Activated B cell treated with CpG ODN at 0.5 μM for 24 hours (primary cell): ENCODE measurements at regions of chr9 and their contacts with region 1.

Region 1: GRCh38 chr9:118975736-118976135 is 393.5 kb downstream of the BRINP1 start:
- DNase-seq: no peak
- ATAC-seq: no peak
- H3K4me3 Mint-ChIP-seq: no peak overlapping the region
- H3K27ac Mint-ChIP-seq: no peak overlapping the region
- H3K4me1 Mint-ChIP-seq: no peaks in the 10 kb centered on the region
- H3K27me3 Mint-ChIP-seq: no peaks in the 10 kb centered on the region
- CTCF ChIP-seq: no peak

Region 2: DNA sequence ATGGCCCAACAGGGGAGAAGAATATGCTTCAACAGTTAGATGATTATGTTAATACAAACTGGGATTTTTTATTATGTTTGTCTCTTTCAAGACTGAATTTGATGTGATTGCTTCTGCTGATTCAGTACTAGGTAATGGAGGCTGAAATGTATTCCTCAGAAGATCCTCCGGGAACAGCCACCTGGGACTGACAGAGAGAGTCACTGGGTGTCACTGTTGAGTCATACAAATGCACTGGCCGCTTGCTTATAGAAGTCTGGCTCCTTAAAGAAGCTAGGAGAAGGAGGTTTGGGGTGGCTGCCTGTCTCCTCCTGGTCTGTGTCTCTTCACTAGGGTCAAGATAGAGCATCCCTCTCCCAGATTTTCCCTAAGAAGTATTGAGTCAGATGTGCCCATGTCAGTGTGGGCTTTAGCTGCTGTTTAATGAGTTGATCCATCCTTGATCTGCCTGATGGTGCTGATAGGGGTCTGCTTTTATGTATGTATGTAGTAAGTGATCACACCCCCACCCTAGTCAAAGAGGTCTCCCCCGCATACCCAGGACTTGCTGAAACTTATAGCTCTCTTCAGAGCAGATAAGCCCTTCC is 379.9 kb before region 1 on chr9:
- CTCF ChIA-PET with region 1: no interaction called
- POLR2A ChIA-PET with region 1: no interaction called
- intact Hi-C with region 1: no loop called
- DNase-seq: no peak
- ATAC-seq: no peak
- H3K4me3 Mint-ChIP-seq: no peak overlapping the region
- H3K27ac Mint-ChIP-seq: no peak overlapping the region
- H3K4me1 Mint-ChIP-seq: no peaks in the 10 kb centered on the region
- H3K27me3 Mint-ChIP-seq: no peaks in the 10 kb centered on the region
- CTCF ChIP-seq: no peak

Region 3: GRCh38 chr9:118957585-118957984 is 18.2 kb before region 1 on chr9:
- CTCF ChIA-PET with region 1: no interaction called
- POLR2A ChIA-PET with region 1: no interaction called
- intact Hi-C with region 1: loop called (anchors 1 kb)
- DNase-seq: no peak
- ATAC-seq: no peak
- H3K4me3 Mint-ChIP-seq: no peak overlapping the region
- H3K27ac Mint-ChIP-seq: no peak overlapping the region
- H3K4me1 Mint-ChIP-seq: no peaks in the 10 kb centered on the region
- H3K27me3 Mint-ChIP-seq: no peaks in the 10 kb centered on the region
- CTCF ChIP-seq: no peak

Region 4: DNA sequence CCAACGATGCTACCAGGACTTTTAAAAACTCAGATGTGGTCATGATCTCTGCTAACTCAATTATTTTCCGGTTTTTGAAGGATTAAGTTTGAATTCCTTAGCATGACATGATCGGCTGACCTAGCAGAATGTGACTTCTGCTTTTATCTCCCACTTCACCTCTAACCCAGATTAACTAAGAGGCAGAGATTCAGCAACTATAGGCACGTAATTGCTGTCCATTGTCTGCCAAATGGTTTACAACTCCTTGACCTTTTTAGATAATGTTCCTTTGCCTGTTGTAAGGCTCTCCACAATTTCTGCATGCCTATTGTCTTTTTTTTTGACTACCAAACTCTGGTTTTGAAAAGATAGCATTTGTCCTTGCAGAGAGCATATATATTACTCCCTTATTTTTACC is 125.3 kb after region 1 on chr9:
- CTCF ChIA-PET with region 1: no interaction called
- POLR2A ChIA-PET with region 1: no interaction called
- intact Hi-C with region 1: no loop called
- DNase-seq: no peak
- ATAC-seq: no peak
- H3K4me3 Mint-ChIP-seq: no peak overlapping the region
- H3K27ac Mint-ChIP-seq: no peak overlapping the region
- H3K4me1 Mint-ChIP-seq: no peaks in the 10 kb centered on the region
- H3K27me3 Mint-ChIP-seq: no peaks in the 10 kb centered on the region
- CTCF ChIP-seq: no peak

Region 5: DNA sequence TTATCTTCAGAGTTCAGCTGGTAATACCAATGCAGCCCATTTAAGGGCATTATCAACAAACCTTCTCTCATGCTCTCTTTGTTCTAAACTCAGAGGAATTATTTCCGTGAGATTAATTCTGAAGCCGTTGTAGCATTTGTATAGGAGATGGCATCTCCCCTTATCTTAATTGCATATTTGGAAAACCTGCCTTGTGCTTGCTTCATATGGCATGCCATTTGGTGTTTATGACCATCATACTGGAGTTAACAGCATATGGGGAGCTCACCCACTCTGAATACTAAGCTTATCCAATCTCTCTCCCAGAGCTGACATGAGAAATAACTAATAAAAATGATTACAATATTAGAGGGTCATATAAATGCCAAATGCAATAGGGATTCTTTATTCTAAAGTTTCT is 150.3 kb after region 1 on chr9:
- CTCF ChIA-PET with region 1: no interaction called
- POLR2A ChIA-PET with region 1: no interaction called
- intact Hi-C with region 1: no loop called
- DNase-seq: no peak
- ATAC-seq: no peak
- H3K4me3 Mint-ChIP-seq: no peak overlapping the region
- H3K27ac Mint-ChIP-seq: no peak overlapping the region
- H3K4me1 Mint-ChIP-seq: no peaks in the 10 kb centered on the region
- H3K27me3 Mint-ChIP-seq: no peaks in the 10 kb centered on the region
- CTCF ChIP-seq: no peak